Posterior cingulate gyrus (tissue), 11 donors: ENCODE measurements at regions of chr9 and their contacts with region 1.

Region 1: DNA sequence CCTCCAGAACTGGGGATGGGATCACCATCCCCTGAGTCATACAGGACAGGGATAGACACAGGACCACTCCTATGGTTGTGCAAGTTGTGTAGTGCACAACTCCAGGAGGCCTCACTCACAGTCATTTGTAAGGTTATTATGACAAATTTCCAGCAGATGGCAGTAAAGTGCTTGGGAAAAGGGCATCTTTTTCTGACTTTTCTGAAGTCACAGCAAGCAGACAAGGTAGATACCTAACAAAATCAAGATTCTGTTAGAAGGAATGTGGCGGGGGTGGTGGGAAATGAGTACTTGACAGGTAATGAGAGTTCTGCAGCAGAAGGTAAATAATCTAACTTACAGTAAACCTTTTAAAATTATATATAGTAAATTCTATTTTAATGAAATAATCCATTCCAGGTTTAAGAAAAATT is 16.7 kb upstream of the KIF27 start:
- DNase-seq: peak in 1 of 10 donors; percentile 11

Region 2: GRCh38 chr9:83636813-83637212 is 301.1 kb before region 1 on chr9:
- intact Hi-C with region 1: no loop called
- DNase-seq: no peak

Region 3: GRCh38 chr9:83980395-83981125 is 42.6 kb after region 1 on chr9 and contains the start of gene RMI1:
- intact Hi-C with region 1: no loop called
- DNase-seq: peak; percentile 97 to 99 (median 98)

Region 4: DNA sequence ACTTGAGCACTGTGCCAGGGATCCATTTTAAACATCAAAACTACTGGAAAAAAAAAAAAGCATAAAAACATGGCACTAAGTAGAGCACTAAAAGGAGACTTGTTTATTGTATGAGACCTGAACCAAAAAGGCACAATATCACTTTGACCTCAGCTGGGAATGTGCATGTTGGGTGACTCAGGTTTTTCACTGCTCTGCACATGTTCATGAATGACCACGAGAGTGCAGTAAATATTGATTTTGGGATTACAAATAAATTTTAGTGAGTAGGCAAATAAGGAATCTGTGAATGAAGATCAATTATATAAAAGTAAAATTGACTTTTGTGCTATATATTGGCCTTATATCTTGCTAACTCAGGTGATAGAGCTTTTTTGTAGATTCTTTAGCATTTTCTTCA is 54.5 kb after region 1 on chr9:
- intact Hi-C with region 1: no loop called
- DNase-seq: no peak

Region 5: GRCh38 chr9:84170521-84171141 is 232.7 kb after region 1 on chr9:
- intact Hi-C with region 1: loop called (anchors 5 kb)
- DNase-seq: peak in 7 of 10 donors; percentile 9 to 87 (median 24)

Region 6: DNA sequence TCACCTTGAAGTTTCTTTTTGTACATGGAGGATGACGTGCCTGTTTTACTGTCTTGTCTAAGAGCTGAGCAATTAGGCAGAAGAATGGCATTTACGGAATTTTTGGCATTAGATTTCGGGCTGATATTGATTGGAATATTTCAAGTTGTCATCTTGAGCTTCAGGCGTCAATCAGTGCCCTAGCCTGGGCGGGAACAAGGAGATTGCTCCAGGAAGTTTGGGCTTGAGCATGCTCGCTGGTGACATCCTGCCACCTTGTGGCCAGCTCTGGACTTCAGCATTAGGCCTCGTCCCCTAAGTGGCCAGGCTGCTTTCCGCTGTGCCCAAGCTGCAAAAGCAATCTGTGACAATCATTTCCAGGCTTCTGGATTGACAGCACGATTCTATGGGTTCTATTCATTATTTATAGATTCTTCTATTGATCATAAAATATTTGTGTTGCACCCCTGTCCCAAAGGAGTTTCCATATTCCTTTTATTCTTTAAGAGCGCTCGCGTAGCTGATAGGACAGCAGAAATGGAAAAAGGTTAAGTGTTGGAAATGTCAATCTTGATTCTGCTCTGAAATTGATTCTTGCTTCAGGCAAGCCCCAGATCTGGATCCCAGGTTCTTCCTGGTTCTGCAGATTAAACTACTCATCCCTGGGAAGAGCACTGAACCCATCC is 323.3 kb after region 1 on chr9:
- intact Hi-C with region 1: loop called (anchors 1 kb)
- DNase-seq: peak; percentile 63 to 97 (median 84)

Region 7: DNA sequence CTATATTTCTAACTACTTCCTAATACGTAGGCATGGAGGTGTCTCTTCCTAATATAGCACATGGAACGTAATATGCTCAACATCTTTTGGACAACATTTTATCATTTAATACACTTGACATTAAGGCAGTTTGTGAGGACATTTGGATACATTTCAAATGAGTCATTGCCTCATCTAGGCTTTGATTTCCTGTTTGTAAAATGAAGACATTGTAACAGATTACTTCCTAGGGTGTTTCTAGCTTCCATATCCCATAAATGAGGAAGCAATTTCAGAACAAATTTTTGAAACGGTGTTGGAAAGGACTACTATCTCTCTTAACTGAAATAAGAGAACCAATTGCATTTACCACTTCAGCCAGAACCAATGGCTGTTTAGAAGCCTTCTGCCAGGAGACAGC is 363.9 kb after region 1 on chr9:
- intact Hi-C with region 1: no loop called
- DNase-seq: no peak

Region 8: GRCh38 chr9:84315278-84315877 is 377.5 kb after region 1 on chr9:
- intact Hi-C with region 1: loop called (anchors 2 kb)
- DNase-seq: peak in 6 of 10 donors; percentile 37 to 88 (median 55)